ENCODE measurements at regions of chr15 and their contacts with region 1.

Region 1: DNA sequence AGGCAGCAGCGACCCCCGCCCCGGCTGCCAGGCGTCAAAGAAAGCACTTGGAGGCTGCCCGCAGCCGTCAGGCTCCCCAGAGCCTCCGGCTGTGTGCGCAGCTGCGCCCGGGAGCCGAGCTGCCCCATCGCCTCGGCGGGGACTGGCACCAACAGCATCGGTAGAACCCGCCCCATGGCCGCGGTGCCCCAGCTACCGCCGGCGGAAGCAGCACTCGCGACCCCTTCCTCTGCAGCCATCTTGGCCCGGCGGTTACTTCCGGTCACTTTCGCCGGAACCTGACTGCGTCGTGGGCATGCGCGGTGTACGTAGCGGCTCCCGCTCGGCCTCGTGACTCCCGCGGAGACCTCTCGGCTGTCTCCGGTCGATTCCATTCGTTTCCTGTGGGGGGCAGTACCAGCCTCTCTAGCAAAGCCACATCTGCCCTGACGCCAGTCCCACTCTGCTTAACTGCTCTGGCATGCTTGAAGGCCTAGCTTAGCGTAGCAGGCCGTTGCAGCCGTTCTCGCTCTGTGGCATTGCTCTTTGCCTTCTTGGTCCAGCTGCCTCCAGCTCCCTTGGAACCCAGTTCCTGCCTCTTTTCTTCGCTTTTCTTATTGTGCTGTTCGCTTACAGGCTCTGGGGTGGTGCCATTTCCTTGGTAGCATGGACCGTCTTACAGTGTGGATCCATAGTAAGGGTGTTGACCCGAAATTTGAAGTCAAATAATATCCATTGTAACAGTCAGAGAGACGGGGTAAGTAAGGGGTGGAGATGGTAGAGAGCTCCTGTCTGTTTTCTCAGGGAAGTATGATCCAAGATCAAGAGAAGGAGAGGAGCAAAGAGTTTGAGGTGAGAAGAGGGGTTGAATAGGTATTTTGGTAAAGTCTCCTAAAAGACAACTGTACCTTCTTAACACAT is at the start of gene SPG11:
- DNase-seq: peak; percentile 88
- ATAC-seq: peak; percentile 83
- H3K4me3 Mint-ChIP-seq: peak within 1 kb of the TSS; percentile 98
- H3K27ac Mint-ChIP-seq: peak within 1 kb of the TSS; percentile 99
- H3K4me1 Mint-ChIP-seq: peaks cover 58% of the 10 kb centered on the region
- H3K27me3 Mint-ChIP-seq: no peaks in the 10 kb centered on the region
- CTCF ChIP-seq: no peak
- total RNA-seq, gene SPG11: 132 and 161 TPM in 2 replicates

Region 2: GRCh38 chr15:44584162-44584749 is 79.4 kb before region 1 on chr15:
- CTCF ChIA-PET with region 1: interaction called, 10 read pairs
- POLR2A ChIA-PET with region 1: interaction called, 7 read pairs
- intact Hi-C with region 1: loop called (anchors 2 kb)
- DNase-seq: peak; percentile 31
- ATAC-seq: peak; percentile 82
- H3K4me3 Mint-ChIP-seq: no peak overlapping the region
- H3K27ac Mint-ChIP-seq: no peak overlapping the region
- H3K4me1 Mint-ChIP-seq: peaks cover 2% of the 10 kb centered on the region
- H3K27me3 Mint-ChIP-seq: no peaks in the 10 kb centered on the region
- CTCF ChIP-seq: no peak

Region 3: DNA sequence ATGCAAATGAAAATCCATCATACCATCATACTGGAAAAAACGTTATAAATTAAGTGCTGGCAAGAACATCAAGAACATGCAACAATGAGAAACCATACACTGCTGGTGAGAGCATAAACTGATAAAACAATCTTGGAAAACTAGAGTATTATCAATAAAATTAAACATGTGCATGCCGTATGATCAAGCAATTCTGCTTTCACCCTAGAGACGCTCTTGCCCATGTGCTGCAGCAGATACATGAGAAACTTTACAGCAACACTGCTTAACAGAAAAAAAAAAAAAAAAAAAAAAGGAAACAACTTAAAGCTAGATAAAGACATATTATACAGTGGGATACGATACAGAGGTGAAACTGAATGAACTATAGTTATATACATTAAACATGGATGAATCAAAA is 22.0 kb before region 1 on chr15:
- CTCF ChIA-PET with region 1: no interaction called
- POLR2A ChIA-PET with region 1: interaction called, 4 read pairs
- intact Hi-C with region 1: loop called (anchors 2 kb)
- DNase-seq: no peak
- ATAC-seq: no peak
- H3K4me3 Mint-ChIP-seq: no peak overlapping the region
- H3K27ac Mint-ChIP-seq: no peak overlapping the region
- H3K4me1 Mint-ChIP-seq: peaks cover 31% of the 10 kb centered on the region
- H3K27me3 Mint-ChIP-seq: no peaks in the 10 kb centered on the region
- CTCF ChIP-seq: no peak

Region 4: GRCh38 chr15:44698641-44699040 is 35.0 kb after region 1 on chr15:
- CTCF ChIA-PET with region 1: interaction called, 10 read pairs
- POLR2A ChIA-PET with region 1: interaction called, 5 read pairs
- intact Hi-C with region 1: no loop called
- DNase-seq: no peak
- ATAC-seq: no peak
- H3K4me3 Mint-ChIP-seq: no peak overlapping the region
- H3K27ac Mint-ChIP-seq: no peak overlapping the region
- H3K4me1 Mint-ChIP-seq: peaks cover 11% of the 10 kb centered on the region
- H3K27me3 Mint-ChIP-seq: no peaks in the 10 kb centered on the region
- CTCF ChIP-seq: no peak

Region 5: DNA sequence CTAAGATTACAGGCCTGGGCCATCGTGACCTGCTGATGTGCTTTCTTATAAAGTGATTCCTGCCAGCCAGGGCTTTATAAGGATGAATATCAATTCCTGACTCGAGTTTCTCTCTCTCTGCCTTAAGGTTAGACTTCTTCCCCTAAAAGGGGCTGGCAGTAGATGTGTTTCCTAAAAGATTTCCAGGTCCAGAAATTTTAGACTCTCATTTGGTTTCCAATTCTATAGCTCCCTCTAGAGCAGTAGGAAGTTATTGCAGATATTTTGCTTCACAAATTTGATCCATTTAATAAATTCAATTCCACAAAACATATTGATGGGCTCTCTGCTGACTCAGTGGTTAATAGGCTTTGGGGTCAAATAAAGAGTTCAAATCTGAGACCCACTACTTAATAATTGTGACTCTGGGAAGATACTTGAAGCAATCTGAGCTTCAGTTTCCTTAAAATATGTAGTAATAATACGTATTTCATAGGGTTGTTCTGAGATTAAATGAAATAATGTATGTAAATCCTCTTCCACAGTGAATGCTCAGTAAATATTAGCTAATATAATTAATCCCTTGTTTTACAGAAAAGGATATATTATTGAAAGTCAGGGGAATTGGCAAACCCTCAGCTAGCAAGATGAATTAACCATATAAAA is 74.8 kb after region 1 on chr15:
- CTCF ChIA-PET with region 1: interaction called, 202 read pairs
- POLR2A ChIA-PET with region 1: interaction called, 798 read pairs
- intact Hi-C with region 1: loop called (anchors 1 kb)
- DNase-seq: no peak
- ATAC-seq: no peak
- H3K4me3 Mint-ChIP-seq: no peak overlapping the region
- H3K27ac Mint-ChIP-seq: no peak overlapping the region
- H3K4me1 Mint-ChIP-seq: peaks cover 30% of the 10 kb centered on the region
- H3K27me3 Mint-ChIP-seq: no peaks in the 10 kb centered on the region
- CTCF ChIP-seq: peak; percentile 92